ENCODE measurements at regions of chr12 and their contacts with region 1.

Region 1: DNA sequence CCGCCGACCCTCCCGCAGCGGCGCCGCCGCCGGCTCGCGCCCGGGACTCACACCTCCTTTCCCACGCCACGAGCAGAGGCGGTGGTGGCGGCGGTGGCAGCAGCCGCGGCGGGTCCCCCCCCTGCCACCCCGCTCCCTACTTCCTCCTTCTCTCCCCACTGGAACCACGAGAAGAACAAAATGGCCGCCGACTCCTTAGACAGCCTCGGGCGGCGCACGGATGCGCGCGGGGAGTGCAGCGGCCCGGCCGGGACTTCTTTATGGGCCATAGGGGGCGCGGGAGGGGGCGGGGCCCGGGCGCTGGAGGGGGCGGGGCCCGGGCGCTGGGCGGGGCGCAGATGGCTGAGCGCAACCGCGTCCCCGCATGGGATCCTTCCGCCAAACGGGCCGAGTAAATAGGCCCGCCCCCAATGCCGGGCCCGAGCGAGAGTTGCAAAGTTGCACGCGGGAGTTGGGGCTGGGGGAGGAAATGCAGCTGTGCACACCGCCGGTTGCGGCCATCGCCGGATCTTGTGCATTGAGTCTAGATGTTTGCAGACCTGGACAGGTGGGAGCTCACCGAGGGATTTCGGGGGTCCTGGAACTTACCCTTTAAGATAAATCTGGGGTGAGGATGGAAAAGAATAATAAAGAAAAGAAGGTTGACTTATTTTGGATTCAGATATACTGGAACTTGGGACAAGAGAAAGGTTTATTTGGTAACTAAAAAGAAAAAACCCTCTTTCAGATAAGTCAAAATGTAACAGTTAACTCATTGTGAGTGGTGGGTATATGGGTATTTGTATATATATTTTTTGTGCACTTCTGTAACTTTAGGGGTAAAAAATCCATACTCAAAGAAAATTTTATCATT is at the start of gene PPP1CC:
- DNase-seq: peak; percentile 94 to 98 (median 97)
- ATAC-seq: peak; percentile 96
- H3K4me3 ChIP-seq: peak within 1 kb of the TSS; percentile 99
- H3K27ac ChIP-seq: peak within 1 kb of the TSS; percentile 75
- H3K4me1 ChIP-seq: peaks cover 15% of the 10 kb centered on the region
- H3K27me3 ChIP-seq: no peaks in the 10 kb centered on the region
- total RNA-seq, gene PPP1CC: 156 to 175 (median 160) TPM

Region 2: DNA sequence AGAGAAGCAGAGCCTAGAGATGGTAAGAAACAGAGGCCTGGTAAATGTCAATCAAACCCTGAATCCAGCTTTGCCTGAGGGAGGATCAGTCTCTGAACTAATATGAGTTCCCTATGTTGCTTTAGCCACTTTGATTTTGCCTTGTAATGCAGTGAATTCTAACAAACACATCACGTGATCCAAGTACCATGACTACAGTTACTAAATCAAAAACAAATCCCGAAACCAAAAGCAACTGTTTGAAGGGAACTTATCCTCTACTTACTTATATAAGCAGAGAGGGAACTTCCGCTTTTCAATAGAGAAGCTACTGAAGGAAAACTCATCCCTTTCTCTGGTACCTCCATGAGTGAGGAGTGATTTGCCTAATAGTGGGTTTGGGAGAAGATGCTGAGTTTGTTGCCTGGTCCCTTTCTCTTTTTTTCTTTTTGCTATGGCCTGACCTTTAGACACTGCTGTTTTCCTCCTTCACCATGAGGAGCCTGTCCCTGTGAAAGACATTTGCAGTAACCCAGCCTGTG is 152.1 kb before region 1 on chr12:
- intact Hi-C with region 1: no loop called
- DNase-seq: no peak
- ATAC-seq: peak; percentile 54 to 63
- H3K4me3 ChIP-seq: no peak overlapping the region
- H3K27ac ChIP-seq: peak overlapping the region; percentile 57
- H3K4me1 ChIP-seq: no peaks in the 10 kb centered on the region
- H3K27me3 ChIP-seq: no peaks in the 10 kb centered on the region

Region 3: DNA sequence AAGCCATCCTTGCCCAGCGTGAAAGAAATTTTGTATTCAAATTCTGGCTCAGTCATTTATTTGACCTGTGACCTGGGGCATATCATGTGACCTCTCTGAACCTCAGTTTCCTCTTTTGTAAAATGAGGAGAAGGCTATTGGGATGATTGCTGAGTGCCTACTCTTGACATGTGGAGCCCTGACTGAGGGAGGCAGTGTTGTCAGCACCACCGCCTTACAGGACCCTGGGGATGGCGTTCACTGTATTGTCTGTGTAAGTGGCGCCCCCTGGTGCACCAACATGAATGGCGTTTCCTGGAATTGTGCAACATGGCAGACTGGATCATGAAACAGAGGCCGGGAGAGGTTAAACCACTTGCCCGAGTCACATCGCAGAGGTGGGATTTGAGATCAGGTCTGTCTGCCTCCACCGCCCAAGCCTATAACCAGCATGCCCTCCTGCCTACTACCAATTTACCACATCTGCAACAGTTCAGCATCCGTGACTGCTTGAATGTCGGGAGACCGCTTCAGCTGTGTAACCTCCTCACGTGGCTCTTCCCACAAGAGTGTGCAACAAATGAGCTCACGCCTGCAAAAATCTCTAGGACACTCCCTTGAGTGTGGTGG is 83.8 kb after region 1 on chr12:
- intact Hi-C with region 1: loop called in 2 of 4 experiments (anchors 10 kb)
- DNase-seq: peak; percentile 84 to 96 (median 92)
- ATAC-seq: peak; percentile 93
- H3K4me3 ChIP-seq: no peak overlapping the region
- H3K27ac ChIP-seq: no peak overlapping the region
- H3K4me1 ChIP-seq: no peaks in the 10 kb centered on the region
- H3K27me3 ChIP-seq: no peaks in the 10 kb centered on the region

Region 4: DNA sequence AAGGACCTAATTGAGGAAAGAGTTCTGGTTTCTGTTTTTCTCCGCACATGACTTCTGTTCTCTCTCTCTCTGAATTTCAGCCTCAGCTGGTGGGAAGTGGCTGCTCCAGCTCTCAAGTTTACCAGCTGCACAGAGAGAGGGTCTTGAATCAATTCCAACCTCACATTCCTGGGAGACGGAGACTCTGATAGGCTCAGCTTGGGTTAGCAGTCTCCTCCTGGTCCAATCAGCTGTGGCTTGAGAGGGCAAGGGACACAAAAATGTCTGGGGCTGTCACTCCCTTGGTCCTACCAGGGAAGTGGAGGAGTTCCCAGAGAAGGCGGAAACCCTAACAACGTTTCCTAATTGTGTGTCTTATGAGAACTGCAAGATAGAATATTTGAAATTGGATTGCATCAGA is 110.9 kb after region 1 on chr12:
- intact Hi-C with region 1: no loop called
- DNase-seq: no peak
- ATAC-seq: peak; percentile 18 to 45
- H3K4me3 ChIP-seq: no peak overlapping the region
- H3K27ac ChIP-seq: no peak overlapping the region
- H3K4me1 ChIP-seq: no peaks in the 10 kb centered on the region
- H3K27me3 ChIP-seq: no peaks in the 10 kb centered on the region

Region 5: DNA sequence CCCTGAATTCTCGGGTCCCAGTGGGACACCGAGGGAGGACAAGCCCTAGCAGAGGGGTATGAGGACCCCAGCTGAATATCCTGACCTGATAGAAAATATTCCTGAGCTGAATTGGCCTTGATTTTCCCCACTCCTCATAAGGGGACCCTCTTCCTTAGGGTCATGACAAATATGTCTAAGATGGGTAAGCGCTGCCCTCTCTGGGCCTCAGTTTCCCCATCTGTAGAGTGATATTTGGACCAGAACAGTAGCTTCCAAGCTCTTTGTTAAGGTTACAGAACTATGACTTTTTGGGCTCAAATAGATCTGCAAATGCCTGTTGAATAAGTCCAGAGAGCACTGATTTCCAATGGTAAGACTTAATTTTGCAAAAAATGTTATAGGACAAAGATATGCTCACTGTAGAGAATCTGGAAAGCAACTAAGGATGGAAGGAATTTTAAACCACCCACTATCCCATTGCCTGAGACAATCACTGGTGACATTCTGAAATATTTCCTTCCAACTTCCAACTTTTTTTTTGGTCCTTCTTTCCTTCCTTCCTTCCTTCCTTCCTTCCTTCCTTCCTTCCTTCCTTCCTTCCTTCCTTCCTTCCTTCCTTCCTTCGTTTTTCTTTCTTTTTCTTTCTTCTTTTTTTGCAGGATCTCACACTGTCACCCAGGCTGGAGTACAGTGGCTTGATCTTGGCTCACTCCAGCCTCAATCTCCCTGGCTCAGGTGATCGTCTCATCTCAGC is 145.5 kb after region 1 on chr12:
- intact Hi-C with region 1: loop called in 1 of 4 experiments (anchors 5 kb)
- DNase-seq: no peak
- ATAC-seq: no peak
- H3K4me3 ChIP-seq: no peak overlapping the region
- H3K27ac ChIP-seq: no peak overlapping the region
- H3K4me1 ChIP-seq: no peaks in the 10 kb centered on the region
- H3K27me3 ChIP-seq: no peaks in the 10 kb centered on the region

Region 6: DNA sequence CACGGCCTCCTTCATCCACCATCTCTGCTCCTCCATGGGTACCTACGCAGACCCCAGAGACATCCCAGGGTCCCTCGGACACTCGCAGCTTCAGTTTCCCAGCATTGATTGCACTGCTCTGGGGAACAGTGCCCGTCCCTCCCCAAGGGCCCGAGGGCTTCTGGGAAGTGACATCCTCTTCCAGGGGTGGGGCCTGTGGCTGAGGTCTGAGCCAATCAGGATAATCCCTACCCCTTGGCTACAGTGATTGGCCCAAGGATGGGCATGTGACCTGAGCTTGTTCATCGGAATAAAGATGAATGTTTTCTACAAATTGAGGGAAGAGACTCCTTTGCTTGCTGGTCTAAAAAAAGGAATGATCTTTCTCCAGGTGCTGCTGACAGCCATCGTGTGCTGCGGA is 214.7 kb after region 1 on chr12:
- intact Hi-C with region 1: no loop called
- DNase-seq: no peak
- ATAC-seq: no peak
- H3K4me3 ChIP-seq: no peak overlapping the region
- H3K27ac ChIP-seq: no peak overlapping the region
- H3K4me1 ChIP-seq: no peaks in the 10 kb centered on the region
- H3K27me3 ChIP-seq: no peaks in the 10 kb centered on the region